ENCODE measurements at regions of chr5 and their contacts with region 1.

Region 1: DNA sequence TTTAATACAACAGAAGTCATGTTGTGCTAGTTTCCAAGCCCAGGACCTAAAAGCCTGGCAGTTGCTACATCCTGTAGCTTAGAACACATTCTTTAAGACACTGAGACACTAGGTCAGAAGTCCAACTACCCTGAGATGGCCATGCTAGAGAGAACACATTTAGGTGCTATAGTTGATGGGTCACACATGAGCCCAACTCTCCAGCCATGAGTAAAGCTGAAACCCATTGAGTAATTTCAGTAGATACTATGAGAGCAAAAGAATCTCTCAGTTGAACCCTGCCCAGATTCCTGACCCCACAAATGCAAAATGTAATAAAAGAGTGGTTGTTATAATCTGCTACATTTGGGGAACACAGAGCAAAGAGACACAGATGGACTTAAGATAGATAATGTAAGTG is 164.4 kb downstream of the SEMA5A start:
- DNase-seq: no peak
- ATAC-seq: no peak
- H3K4me3 ChIP-seq: no peak overlapping the region
- H3K27ac ChIP-seq: 0 out of 2 replicates have a peak overlapping the region, but pooled peaks have one; percentile 83
- H3K4me1 ChIP-seq: peaks cover 63% of the 10 kb centered on the region
- H3K27me3 ChIP-seq: no peaks in the 10 kb centered on the region
- CTCF ChIP-seq: no peak

Region 2: GRCh38 chr5:9025942-9026341 is 355.5 kb before region 1 on chr5:
- CTCF ChIA-PET with region 1: no interaction called
- POLR2A ChIA-PET with region 1: no interaction called
- intact Hi-C with region 1: no loop called
- DNase-seq: no peak
- ATAC-seq: no peak
- H3K4me3 ChIP-seq: no peak overlapping the region
- H3K27ac ChIP-seq: no peak overlapping the region
- H3K4me1 ChIP-seq: peaks cover 12% of the 10 kb centered on the region
- H3K27me3 ChIP-seq: no peaks in the 10 kb centered on the region
- CTCF ChIP-seq: no peak

Region 3: DNA sequence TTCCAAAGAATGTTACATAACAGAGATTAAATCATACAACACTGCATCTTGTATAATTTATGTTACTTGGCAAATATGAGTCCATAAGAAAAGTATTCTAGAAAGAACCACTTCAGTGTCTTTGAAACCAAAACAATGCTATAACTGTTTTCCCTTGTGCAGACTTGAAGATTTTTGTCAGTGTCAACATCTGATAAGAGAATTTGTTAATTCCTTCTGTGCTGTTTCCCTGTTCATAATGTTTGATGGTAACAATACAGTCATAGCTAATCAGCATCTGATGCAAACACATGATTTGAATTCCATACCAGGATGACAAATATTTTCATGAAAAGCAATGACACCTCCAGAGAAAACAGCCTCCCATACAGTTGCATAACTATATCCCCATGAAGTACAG is 142.4 kb before region 1 on chr5:
- CTCF ChIA-PET with region 1: no interaction called
- POLR2A ChIA-PET with region 1: no interaction called
- intact Hi-C with region 1: loop called (anchors 1 kb)
- DNase-seq: peak; percentile 66
- ATAC-seq: peak; percentile 48
- H3K4me3 ChIP-seq: peak overlapping the region; percentile 7; the same call in 1 of the 2 replicates
- H3K27ac ChIP-seq: peak overlapping the region; percentile 60
- H3K4me1 ChIP-seq: peaks cover 30% of the 10 kb centered on the region
- H3K27me3 ChIP-seq: no peaks in the 10 kb centered on the region
- CTCF ChIP-seq: no peak

Region 4: DNA sequence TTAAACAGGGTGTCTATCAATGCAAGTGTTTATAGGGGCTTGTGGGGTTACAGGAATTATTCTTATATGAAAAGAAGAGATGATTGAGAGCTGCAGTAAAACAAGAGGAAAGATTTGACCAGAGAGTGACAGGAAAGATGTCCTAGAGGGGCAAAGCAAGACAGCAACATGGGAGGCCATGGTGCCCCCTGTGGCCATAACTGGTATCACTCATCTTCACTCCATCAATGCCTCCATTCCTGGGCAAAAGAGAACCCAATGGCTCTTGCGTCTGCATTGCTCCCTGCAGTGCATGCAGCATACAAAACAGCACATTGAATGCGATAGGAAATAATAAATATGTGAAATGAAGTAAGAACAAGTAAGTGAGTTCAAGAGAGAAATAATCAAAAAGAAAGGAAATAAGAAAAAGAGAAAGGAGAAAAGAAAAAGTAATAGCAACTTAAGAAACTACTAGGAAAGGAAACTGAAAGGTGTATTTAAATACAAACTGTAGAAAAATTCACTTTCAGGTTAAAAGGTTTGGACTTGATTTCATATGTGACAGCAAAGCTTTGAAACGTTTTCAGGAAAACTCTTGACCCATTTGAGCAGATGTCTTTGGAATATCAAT is 42.2 kb before region 1 on chr5:
- CTCF ChIA-PET with region 1: no interaction called
- POLR2A ChIA-PET with region 1: no interaction called
- intact Hi-C with region 1: loop called (anchors 2 kb)
- DNase-seq: peak; percentile 55
- ATAC-seq: no peak
- H3K4me3 ChIP-seq: no peak overlapping the region
- H3K27ac ChIP-seq: no peak overlapping the region
- H3K4me1 ChIP-seq: peaks cover 34% of the 10 kb centered on the region
- H3K27me3 ChIP-seq: no peaks in the 10 kb centered on the region
- CTCF ChIP-seq: peak; percentile 95

Region 5: DNA sequence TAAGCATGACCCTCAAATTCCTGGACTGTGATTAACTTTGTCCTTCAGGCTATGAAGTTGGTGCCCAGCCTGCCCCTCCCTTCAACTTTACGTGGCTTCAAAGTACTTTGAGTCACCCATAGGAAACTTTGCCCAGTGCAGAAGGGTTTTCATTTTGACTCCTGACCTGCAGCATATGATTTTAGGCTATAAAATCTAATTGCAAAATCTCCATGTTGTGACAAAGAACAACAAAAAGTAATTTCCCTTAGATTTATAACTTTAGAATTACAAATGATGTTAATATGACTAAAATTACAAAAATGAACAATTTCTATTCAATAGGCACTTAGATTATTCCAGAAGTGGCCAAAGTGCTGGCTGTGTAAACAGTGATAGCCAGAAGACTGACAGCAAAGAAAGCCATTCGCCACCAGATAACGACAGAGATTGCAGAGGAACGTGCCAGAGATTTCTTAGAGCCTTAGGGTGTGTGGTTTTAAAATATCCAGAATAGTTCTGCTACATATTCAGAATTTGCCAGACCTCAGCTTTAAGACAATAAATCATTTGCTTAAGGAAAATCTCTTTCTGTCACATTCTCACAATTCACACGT is 33.0 kb before region 1 on chr5:
- CTCF ChIA-PET with region 1: no interaction called
- POLR2A ChIA-PET with region 1: no interaction called
- intact Hi-C with region 1: loop called (anchors 2 kb)
- DNase-seq: peak; percentile 98
- ATAC-seq: peak; percentile 92
- H3K4me3 ChIP-seq: peak overlapping the region; percentile 33
- H3K27ac ChIP-seq: peak overlapping the region; percentile 44
- H3K4me1 ChIP-seq: peaks cover 36% of the 10 kb centered on the region
- H3K27me3 ChIP-seq: no peaks in the 10 kb centered on the region
- CTCF ChIP-seq: no peak

Region 6: GRCh38 chr5:9431151-9431495 is 49.7 kb after region 1 on chr5:
- CTCF ChIA-PET with region 1: no interaction called
- POLR2A ChIA-PET with region 1: interaction called, 10 read pairs
- intact Hi-C with region 1: no loop called
- DNase-seq: no peak
- ATAC-seq: no peak
- H3K4me3 ChIP-seq: no peak overlapping the region
- H3K27ac ChIP-seq: no peak overlapping the region
- H3K4me1 ChIP-seq: peaks cover 9% of the 10 kb centered on the region; the same call in 1 of the 2 replicates
- H3K27me3 ChIP-seq: no peaks in the 10 kb centered on the region
- CTCF ChIP-seq: no peak

Region 7: GRCh38 chr5:9498541-9499497 is 117.4 kb after region 1 on chr5:
- CTCF ChIA-PET with region 1: interaction called, 5 read pairs
- POLR2A ChIA-PET with region 1: no interaction called
- intact Hi-C with region 1: loop called (anchors 5 kb)
- DNase-seq: peak; percentile 94
- ATAC-seq: peak; percentile 92
- H3K4me3 ChIP-seq: no peak overlapping the region
- H3K27ac ChIP-seq: no peak overlapping the region
- H3K4me1 ChIP-seq: peaks cover 5% of the 10 kb centered on the region; the same call in 1 of the 2 replicates
- H3K27me3 ChIP-seq: no peaks in the 10 kb centered on the region
- CTCF ChIP-seq: peak; percentile 98

Region 8: GRCh38 chr5:9513827-9514226 is 132.4 kb after region 1 on chr5:
- CTCF ChIA-PET with region 1: no interaction called
- POLR2A ChIA-PET with region 1: no interaction called
- intact Hi-C with region 1: no loop called
- DNase-seq: peak; percentile 68
- ATAC-seq: peak; percentile 56; the same call in 1 of the 2 replicates
- H3K4me3 ChIP-seq: no peak overlapping the region
- H3K27ac ChIP-seq: no peak overlapping the region
- H3K4me1 ChIP-seq: no peaks in the 10 kb centered on the region
- H3K27me3 ChIP-seq: no peaks in the 10 kb centered on the region
- CTCF ChIP-seq: peak; percentile 75